ENCODE measurements at regions of chr12 and their contacts with region 1.

Region 1: GRCh38 chr12:71655495-71655894 is 8.2 kb downstream of the ZFC3H1 start:
- DNase-seq: no peak
- H3K4me3 Mint-ChIP-seq: peak overlapping the region; percentile 65
- H3K27ac Mint-ChIP-seq: peak overlapping the region; percentile 2
- H3K4me1 Mint-ChIP-seq: peaks cover 35% of the 10 kb centered on the region
- H3K27me3 Mint-ChIP-seq: no peaks in the 10 kb centered on the region

Region 2: DNA sequence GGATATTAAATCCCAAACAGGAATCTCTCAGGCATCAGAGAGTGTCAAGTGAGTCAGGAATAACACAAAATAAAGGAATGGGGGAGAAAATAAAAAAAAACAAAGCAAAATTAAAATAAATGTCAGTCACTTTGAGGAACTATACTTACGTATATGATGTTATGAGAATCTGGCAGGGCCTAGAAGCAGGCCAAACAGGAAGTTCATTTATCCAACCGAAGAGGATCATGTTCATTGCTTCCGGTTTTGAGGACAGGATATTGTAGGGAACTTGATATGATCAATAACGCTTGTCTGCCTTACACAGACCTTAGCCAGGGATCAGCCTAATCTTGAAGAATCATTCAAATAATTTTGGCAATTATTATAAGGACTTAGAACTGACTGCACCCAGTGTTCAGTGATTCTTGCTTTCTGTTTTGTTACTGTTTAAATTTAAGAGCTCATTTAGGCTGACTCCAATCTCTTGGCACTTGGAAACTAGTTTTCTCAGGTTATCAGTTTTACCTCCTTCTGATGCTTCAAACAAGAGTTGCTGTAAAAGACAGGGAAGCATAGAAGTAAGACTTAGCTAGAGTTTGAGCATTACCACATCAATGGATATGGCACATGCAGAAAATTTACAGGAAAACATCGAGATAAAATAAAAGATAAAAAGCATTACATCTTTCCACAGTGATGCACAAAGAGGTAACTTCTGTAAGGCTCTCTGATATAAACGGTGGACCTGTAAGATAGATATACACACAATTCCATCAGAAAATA is 45.3 kb before region 1 on chr12:
- intact Hi-C with region 1: loop called (anchors 5 kb)
- DNase-seq: no peak
- H3K4me3 Mint-ChIP-seq: peak overlapping the region; percentile 32
- H3K27ac Mint-ChIP-seq: peak overlapping the region; percentile 76
- H3K4me1 Mint-ChIP-seq: peaks cover 11% of the 10 kb centered on the region
- H3K27me3 Mint-ChIP-seq: no peaks in the 10 kb centered on the region